Heart right ventricle (tissue), 16 donors: ENCODE measurements at regions of chr2 and their contacts with region 1.

Region 1: DNA sequence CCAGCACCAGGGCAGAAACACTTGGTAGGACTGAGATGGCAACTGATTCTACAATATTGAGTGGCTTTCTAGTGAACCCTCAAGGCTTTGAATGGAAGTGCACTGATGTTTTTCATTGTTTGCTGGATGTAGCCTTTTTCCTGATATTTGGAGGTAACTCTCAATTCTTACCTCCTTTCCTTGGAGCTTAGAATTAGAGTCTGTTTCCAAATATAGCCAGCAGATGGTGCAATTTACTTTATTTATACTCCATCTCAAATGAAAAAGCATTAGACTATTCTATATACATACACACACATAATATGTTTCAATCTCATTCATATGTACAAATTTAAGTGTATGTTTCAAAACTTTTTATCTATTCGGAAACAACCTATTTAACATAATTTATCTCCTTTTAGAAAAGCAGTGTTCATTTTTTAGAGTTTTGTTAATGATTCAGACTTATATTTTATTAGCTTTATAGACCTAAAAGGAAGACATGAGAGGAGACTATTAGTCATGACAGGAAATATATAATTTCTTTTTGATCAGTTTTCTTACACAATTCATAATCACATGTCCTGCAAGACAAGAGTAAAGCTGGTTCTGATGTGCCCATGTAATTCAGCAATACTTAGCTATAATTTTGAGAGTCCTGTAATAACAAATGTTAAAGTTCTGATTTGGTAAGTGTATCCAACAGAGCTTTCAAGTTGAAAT is 124.8 kb downstream of the NUP35 start:
- DNase-seq: no peak
- ATAC-seq: no peak
- H3K4me3 ChIP-seq: no peak overlapping the region
- H3K27ac ChIP-seq: no peak overlapping the region
- H3K4me1 ChIP-seq: no peaks in the 10 kb centered on the region
- H3K27me3 ChIP-seq: no peaks in the 10 kb centered on the region
- CTCF ChIP-seq: peak; percentile 12 to 65 (median 51)

Region 2: DNA sequence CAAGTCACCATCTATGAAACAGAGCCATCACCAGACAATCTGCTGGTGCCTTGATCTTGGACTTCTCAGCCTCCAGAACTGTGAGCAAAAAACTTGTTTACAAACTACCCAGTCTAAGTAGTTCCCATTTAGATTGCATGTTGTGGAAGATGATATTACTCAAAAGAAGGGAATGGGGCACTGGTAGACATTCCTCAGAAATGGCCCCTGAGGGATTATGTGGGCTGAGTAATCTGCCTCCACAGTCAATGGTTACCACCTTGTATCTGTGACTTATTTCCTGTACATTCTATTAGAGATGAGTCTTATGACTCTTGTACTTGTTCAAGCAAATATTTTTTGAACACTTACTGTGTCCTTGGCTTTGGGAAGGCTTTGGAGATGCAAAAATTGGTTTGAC is 35.6 kb after region 1 on chr2:
- intact Hi-C with region 1: no loop called
- DNase-seq: no peak
- ATAC-seq: no peak
- H3K4me3 ChIP-seq: no peak overlapping the region
- H3K27ac ChIP-seq: no peak overlapping the region
- H3K4me1 ChIP-seq: no peaks in the 10 kb centered on the region
- H3K27me3 ChIP-seq: no peaks in the 10 kb centered on the region
- CTCF ChIP-seq: no peak

Region 3: DNA sequence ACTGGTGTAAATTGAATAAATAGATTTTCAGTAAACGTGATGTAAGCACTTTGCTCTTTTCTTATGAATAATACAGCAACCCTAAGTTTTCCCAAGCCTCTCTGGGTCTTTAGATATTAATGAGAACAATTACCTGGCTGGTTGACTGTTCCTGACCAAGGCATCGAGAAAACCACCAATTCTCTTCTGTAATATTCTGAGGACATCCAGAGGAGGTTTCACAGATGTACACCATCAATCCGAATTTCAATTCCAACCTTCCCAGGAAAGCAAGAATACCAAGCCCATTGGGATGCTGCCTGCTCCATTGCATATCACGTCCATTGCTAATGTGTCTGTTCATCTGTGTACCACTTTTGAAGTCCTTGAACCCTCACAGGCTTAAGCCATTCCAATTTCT is 447.0 kb after region 1 on chr2:
- intact Hi-C with region 1: loop called in 2 of 10 experiments (anchors 2 to 5 kb)
- DNase-seq: no peak
- ATAC-seq: peak in 1 of 8 donors; percentile 52
- H3K4me3 ChIP-seq: no peak overlapping the region
- H3K27ac ChIP-seq: no peak overlapping the region
- H3K4me1 ChIP-seq: no peaks in the 10 kb centered on the region
- H3K27me3 ChIP-seq: no peaks in the 10 kb centered on the region
- CTCF ChIP-seq: peak in 3 of 9 donors; percentile 10 to 19 (median 12)